GM12878 (cell line): ENCODE measurements at regions of chr3 and their contacts with region 1.

Region 1: GRCh38 chr3:120417272-120417911 is 33.4 kb downstream of the FSTL1 start:
- DNase-seq: peak; percentile 90
- ATAC-seq: peak; percentile 99
- H3K4me3 ChIP-seq: peak overlapping the region; percentile 66; the same call in 1 of the 2 replicates
- H3K27ac ChIP-seq: no peak overlapping the region
- H3K4me1 ChIP-seq: no peaks in the 10 kb centered on the region; the same call in 1 of the 2 replicates
- H3K27me3 ChIP-seq: peaks cover 0 to 5% of the 10 kb centered on the region in 2 experiments; a peak in 2 of 4 replicates
- CTCF ChIP-seq: peak; percentile 69 to 97 (median 93); a peak in 5 of 6 replicates
- EP300 ChIP-seq: no peak
- POLR2A ChIP-seq: no peak
- RAD21 ChIP-seq: peak; percentile 85

Region 2: DNA sequence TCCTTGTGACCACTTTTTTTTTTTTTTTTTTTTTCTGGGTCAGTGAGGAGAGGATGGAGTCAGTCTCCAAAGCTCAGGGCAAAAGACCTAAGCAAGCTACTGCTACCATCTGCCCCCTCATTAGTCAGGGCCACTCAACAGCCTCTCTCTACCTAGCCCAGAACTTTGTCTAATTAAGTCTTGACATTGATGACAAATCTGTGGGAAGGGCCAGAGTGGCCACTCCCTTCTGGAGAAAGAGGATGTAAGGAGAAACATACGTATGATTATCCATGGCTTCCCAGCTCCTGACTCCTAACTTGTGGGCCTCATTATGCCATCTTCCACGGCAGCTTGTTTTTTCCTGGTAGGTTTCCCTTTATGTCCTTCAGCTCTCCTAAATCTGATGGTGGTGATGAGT is 597.6 kb before region 1 on chr3:
- CTCF ChIA-PET with region 1: interaction called, 5 read pairs
- POLR2A ChIA-PET with region 1: no interaction called
- RAD21 ChIA-PET with region 1: interaction called, 11 read pairs
- SMC1A ChIA-PET with region 1: no interaction called
- in situ Hi-C with region 1: no loop called
- intact Hi-C with region 1: no loop called
- DNase-seq: no peak
- ATAC-seq: no peak
- H3K4me3 ChIP-seq: no peak overlapping the region
- H3K27ac ChIP-seq: no peak overlapping the region
- H3K4me1 ChIP-seq: no peaks in the 10 kb centered on the region
- H3K27me3 ChIP-seq: no peaks in the 10 kb centered on the region
- CTCF ChIP-seq: no peak
- EP300 ChIP-seq: no peak
- POLR2A ChIP-seq: no peak
- RAD21 ChIP-seq: no peak

Region 3: DNA sequence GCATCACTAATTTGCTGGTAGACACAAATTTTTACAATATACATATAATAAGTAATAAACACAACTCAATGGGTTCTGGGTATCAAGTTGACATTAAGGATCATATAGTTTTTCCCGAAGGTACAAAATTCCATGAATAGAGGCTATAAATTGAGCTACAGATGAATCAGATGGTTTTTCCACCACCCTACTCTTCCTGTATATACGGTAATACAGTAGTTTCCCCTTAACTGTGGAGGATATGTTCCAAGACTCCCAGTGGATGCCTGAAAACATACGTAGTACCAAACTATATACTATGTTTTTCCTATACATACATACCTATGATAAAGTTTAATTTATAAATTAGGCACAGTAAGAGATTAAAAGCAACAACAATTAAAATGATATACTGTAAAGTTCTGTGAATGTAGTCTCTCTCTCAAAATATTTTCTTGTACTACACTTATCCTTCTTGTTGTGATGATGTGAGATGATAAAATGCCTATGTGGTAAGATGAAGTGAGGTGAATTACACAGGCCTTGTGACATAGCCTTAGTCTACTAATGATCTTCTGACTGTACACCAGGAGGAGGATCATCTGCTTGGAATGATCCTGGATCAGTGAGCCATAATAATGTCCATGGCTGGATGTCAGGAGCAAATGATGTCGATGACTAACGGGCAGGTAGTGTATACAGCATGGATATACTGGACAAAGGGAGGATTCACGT is 518.8 kb before region 1 on chr3:
- CTCF ChIA-PET with region 1: interaction called, 36 read pairs
- POLR2A ChIA-PET with region 1: no interaction called
- RAD21 ChIA-PET with region 1: interaction called, 6 read pairs
- SMC1A ChIA-PET with region 1: interaction called, 27 read pairs
- in situ Hi-C with region 1: loop called (anchors 10 kb)
- intact Hi-C with region 1: loop called (anchors 5 kb)
- DNase-seq: no peak
- ATAC-seq: no peak
- H3K4me3 ChIP-seq: no peak overlapping the region
- H3K27ac ChIP-seq: no peak overlapping the region
- H3K4me1 ChIP-seq: no peaks in the 10 kb centered on the region
- H3K27me3 ChIP-seq: no peaks in the 10 kb centered on the region
- CTCF ChIP-seq: no peak
- EP300 ChIP-seq: no peak
- POLR2A ChIP-seq: no peak
- RAD21 ChIP-seq: no peak

Region 4: GRCh38 chr3:120245386-120245785 is 172.0 kb before region 1 on chr3:
- CTCF ChIA-PET with region 1: interaction called, 210 read pairs
- POLR2A ChIA-PET with region 1: interaction called, 4 read pairs
- RAD21 ChIA-PET with region 1: interaction called, 75 read pairs
- SMC1A ChIA-PET with region 1: interaction called, 90 read pairs
- in situ Hi-C with region 1: loop called (anchors 5 kb)
- intact Hi-C with region 1: loop called (anchors 1 kb)
- DNase-seq: no peak
- ATAC-seq: no peak
- H3K4me3 ChIP-seq: no peak overlapping the region
- H3K27ac ChIP-seq: no peak overlapping the region
- H3K4me1 ChIP-seq: no peaks in the 10 kb centered on the region
- H3K27me3 ChIP-seq: no peaks in the 10 kb centered on the region
- CTCF ChIP-seq: no peak
- EP300 ChIP-seq: no peak
- POLR2A ChIP-seq: no peak
- RAD21 ChIP-seq: no peak

Region 5: DNA sequence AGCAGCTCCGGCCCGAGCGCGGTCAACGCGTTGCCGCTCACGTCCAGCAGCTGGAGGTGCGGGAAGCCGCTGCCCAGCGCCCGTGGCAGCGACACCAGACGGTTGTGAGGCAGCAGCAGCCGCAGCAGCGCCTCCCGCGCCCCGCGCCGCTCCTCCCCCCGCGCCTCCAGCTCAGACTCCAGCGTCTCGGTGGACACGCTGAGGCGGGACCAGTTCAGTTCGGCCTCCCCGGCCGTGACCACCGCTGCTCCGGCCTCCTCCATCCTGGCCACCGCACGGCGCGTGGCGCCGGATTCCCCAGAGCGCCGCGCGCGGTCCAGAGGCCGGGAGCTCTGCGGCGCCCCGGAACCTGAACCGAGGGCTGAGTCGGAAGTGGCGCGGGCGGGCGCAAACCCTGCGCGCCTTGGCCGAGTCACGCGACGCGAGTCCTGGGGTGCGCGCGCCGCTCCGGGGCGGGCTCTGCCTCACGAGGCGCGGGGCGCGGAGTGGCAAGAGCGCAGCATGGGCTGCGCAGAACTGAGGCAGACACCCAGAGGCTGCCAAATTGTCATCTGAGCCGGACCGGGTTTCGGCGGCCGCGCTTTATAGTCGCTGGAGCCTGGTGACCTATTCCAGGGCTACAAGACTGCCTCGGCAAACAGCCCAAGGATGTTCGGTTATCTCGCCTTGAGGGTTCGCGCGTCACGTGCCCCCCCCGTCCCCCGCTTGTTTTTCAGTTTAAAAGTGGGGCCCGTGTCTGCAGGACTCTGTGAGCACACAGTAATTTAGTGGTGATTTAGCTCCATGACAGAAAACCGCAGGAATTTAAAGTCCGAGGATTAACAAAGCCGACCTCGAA is 68.2 kb before region 1 on chr3 and contains the start of gene LRRC58:
- CTCF ChIA-PET with region 1: interaction called, 52 read pairs
- POLR2A ChIA-PET with region 1: interaction called, 3 read pairs
- RAD21 ChIA-PET with region 1: interaction called, 17 read pairs
- SMC1A ChIA-PET with region 1: interaction called, 26 read pairs
- in situ Hi-C with region 1: no loop called
- intact Hi-C with region 1: loop called (anchors 2 kb)
- DNase-seq: peak; percentile 56
- ATAC-seq: peak; percentile 91
- H3K4me3 ChIP-seq: peak within 1 kb of the TSS; percentile 95
- H3K27ac ChIP-seq: peak within 1 kb of the TSS; percentile 86
- H3K4me1 ChIP-seq: peaks cover 7% of the 10 kb centered on the region; the same call in 1 of the 2 replicates
- H3K27me3 ChIP-seq: no peaks in the 10 kb centered on the region
- CTCF ChIP-seq: peak in 2 of 3 experiments; percentile 25 to 33; a peak in 3 of 6 replicates
- EP300 ChIP-seq: no peak
- POLR2A ChIP-seq: peak; percentile 97
- RAD21 ChIP-seq: no peak
- polyA plus RNA-seq, gene LRRC58: 7.7 to 8.0 TPM

Region 6: GRCh38 chr3:120506828-120507774 is 89.7 kb after region 1 on chr3:
- CTCF ChIA-PET with region 1: interaction called, 10 read pairs
- POLR2A ChIA-PET with region 1: no interaction called
- RAD21 ChIA-PET with region 1: interaction called, 4 read pairs
- SMC1A ChIA-PET with region 1: interaction called, 5 read pairs
- in situ Hi-C with region 1: no loop called
- intact Hi-C with region 1: loop called (anchors 5 kb)
- DNase-seq: no peak
- ATAC-seq: peak; percentile 59; the same call in 2 of the 3 replicates
- H3K4me3 ChIP-seq: no peak overlapping the region
- H3K27ac ChIP-seq: no peak overlapping the region
- H3K4me1 ChIP-seq: no peaks in the 10 kb centered on the region
- H3K27me3 ChIP-seq: no peaks in the 10 kb centered on the region; a peak in 1 of 4 replicates
- CTCF ChIP-seq: peak; percentile 39 to 66 (median 63)
- EP300 ChIP-seq: no peak
- POLR2A ChIP-seq: no peak
- RAD21 ChIP-seq: peak; percentile 30

Region 7: DNA sequence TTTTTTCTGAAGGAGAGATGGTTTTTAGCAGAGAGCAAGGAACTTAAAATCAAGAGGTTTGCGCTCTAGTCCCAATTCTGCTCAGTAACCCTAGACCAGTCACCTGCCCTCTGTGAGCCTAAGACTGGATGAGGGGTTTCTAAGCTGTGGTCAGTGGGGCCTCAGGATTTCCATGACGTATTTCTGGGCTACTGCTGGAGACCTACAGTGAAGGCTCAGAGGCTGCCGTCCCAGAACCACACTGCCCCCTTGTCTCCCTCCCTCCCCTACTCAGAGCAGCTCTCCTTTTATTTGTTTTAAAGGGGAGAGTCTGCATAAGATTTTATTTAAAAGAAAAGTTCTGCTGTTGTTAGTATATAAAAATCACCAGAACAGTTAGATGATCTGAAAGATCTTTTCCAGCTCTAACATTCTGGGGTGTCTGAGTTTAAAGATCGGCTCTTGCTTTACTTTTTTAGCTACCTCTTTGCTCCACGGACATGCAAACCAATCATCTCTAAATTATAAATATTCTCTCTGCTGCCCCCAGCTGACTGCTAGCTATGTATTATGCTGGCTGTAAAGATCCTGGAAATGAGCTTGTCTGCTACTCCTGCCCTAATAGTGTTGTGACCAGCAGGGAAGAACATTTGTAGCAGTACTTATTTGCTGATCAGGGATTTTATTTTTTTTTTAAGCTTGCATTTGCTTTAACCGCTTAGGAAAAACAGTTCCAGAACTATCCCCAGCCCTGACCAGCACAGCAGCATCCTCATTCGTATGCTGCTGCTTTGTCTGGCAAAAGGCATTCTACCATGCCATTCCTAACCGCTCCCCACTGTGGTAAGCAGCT is 150.2 kb after region 1 on chr3:
- CTCF ChIA-PET with region 1: interaction called, 21 read pairs
- POLR2A ChIA-PET with region 1: no interaction called
- RAD21 ChIA-PET with region 1: interaction called, 10 read pairs
- SMC1A ChIA-PET with region 1: interaction called, 15 read pairs
- in situ Hi-C with region 1: no loop called
- intact Hi-C with region 1: no loop called
- DNase-seq: no peak
- ATAC-seq: peak; percentile 89
- H3K4me3 ChIP-seq: no peak overlapping the region
- H3K27ac ChIP-seq: no peak overlapping the region
- H3K4me1 ChIP-seq: no peaks in the 10 kb centered on the region
- H3K27me3 ChIP-seq: no peaks in the 10 kb centered on the region
- CTCF ChIP-seq: peak in 2 of 3 experiments; percentile 21 to 34; a peak in 3 of 6 replicates
- EP300 ChIP-seq: no peak
- POLR2A ChIP-seq: no peak
- RAD21 ChIP-seq: no peak